ENCODE measurements at regions of chr2 and their contacts with region 1.

Region 1: DNA sequence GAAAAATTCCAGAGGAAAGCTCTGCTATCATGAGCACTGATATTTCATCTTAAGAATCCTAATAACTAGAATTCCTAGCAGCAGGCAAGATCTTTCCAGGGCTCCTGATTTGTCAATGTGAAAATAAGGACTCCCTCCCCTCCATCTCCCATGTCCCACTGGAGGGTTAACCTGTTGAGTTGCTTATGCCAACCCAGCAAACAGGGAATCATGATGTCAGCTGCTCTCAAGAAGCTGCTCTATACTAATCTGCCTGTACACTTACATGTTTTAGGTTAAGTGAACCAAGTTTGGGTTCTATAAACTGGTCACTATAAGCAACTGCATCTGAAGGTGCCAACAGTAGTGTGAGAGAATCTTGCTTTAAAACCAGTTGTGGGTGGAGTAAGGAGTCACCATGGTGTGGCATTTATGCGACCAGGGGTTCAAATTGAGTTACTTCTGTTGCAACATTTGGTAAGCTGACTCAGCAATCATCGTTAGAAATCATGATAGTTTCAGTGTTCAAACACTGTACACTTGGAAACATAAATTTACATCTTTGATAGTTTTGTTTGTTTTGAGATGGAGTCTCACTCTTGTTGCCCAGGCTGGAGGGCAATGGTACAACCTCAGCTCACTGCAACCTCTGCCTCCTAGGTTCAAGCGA is 53.4 kb downstream of the STK25 start:
- DNase-seq: no peak
- H3K4me3 ChIP-seq: no peak overlapping the region
- H3K27ac ChIP-seq: no peak overlapping the region
- H3K4me1 ChIP-seq: no peaks in the 10 kb centered on the region
- H3K27me3 ChIP-seq: no peaks in the 10 kb centered on the region
- CTCF ChIP-seq: no peak

Region 2: DNA sequence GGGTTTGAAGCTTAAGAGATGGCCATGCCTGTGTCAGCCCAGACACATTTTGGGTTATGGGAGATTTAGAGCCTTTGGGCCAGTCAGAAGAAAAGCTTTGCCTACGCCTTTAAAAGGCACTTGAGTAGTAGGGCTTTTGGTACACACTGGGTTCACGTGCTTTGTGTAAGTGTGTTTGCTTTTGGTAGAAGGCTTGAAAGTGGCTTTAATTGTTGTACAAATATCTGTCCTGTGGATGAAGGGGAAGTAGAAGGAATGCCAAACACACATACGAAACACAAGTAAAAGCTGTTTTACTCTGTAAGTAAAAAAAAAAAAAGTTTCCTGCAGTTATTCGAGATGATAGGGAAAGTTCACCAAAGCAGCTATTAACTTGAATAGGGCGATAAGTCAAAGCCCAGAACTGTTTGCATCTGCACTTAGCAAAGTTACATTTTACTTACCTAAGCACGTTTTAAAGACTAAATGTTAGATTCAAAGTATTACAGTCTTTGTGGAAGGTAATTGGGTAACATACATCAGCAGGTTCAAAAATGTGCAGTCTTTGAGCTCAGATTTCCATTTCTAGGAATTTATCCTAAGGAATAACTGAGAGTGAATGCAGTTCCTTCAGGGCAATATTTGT is 22.0 kb before region 1 on chr2:
- CTCF ChIA-PET with region 1: no interaction called
- POLR2A ChIA-PET with region 1: interaction called, 10 read pairs
- intact Hi-C with region 1: no loop called
- DNase-seq: no peak
- H3K4me3 ChIP-seq: no peak overlapping the region
- H3K27ac ChIP-seq: no peak overlapping the region
- H3K4me1 ChIP-seq: no peaks in the 10 kb centered on the region
- H3K27me3 ChIP-seq: no peaks in the 10 kb centered on the region
- CTCF ChIP-seq: no peak